GM12878 (cell line): ENCODE measurements at regions of chr14 and their contacts with region 1.

Region 1: GRCh38 chr14:81220830-81221578 is at the start of gene GTF2A1:
- DNase-seq: peak; percentile 82
- ATAC-seq: peak; percentile 84
- H3K4me3 ChIP-seq: peak within 1 kb of the TSS; percentile 85
- H3K27ac ChIP-seq: peak within 1 kb of the TSS; percentile 98
- H3K4me1 ChIP-seq: 0 out of 2 replicates have a peak, but pooled peaks cover 3% of the 10 kb centered on the region
- H3K27me3 ChIP-seq: no peaks in the 10 kb centered on the region
- CTCF ChIP-seq: no peak
- EP300 ChIP-seq: peak; percentile 2 to 49; a peak in 1 of 4 replicates
- POLR2A ChIP-seq: peak; percentile 95
- RAD21 ChIP-seq: no peak
- polyA plus RNA-seq, gene GTF2A1: 3.5 to 5.1 TPM

Region 2: GRCh38 chr14:80941241-80942182 is 279.5 kb before region 1 on chr14 and contains the start of gene CEP128:
- CTCF ChIA-PET with region 1: no interaction called
- POLR2A ChIA-PET with region 1: interaction called, 5 read pairs
- RAD21 ChIA-PET with region 1: no interaction called
- SMC1A ChIA-PET with region 1: no interaction called
- in situ Hi-C with region 1: no loop called
- intact Hi-C with region 1: loop called (anchors 5 kb)
- DNase-seq: peak; percentile 92
- ATAC-seq: peak; percentile 98
- H3K4me3 ChIP-seq: peak within 1 kb of the TSS; percentile 60
- H3K27ac ChIP-seq: peak within 1 kb of the TSS; percentile 78
- H3K4me1 ChIP-seq: no peaks in the 10 kb centered on the region
- H3K27me3 ChIP-seq: no peaks in the 10 kb centered on the region
- CTCF ChIP-seq: no peak
- EP300 ChIP-seq: no peak
- POLR2A ChIP-seq: peak; percentile 55
- RAD21 ChIP-seq: no peak
- polyA plus RNA-seq, gene CEP128: 1.1 to 2.4 TPM

Region 3: GRCh38 chr14:80954687-80955299 is 266.2 kb before region 1 on chr14:
- CTCF ChIA-PET with region 1: no interaction called
- POLR2A ChIA-PET with region 1: no interaction called
- RAD21 ChIA-PET with region 1: no interaction called
- SMC1A ChIA-PET with region 1: no interaction called
- in situ Hi-C with region 1: no loop called
- intact Hi-C with region 1: loop called (anchors 2 kb)
- DNase-seq: no peak
- ATAC-seq: peak; percentile 46
- H3K4me3 ChIP-seq: no peak overlapping the region; the same call in 1 of the 2 replicates
- H3K27ac ChIP-seq: no peak overlapping the region
- H3K4me1 ChIP-seq: peaks cover 12% of the 10 kb centered on the region
- H3K27me3 ChIP-seq: peaks cover 0 to 5% of the 10 kb centered on the region in 2 experiments; a peak in 3 of 4 replicates
- CTCF ChIP-seq: peak; percentile 70 to 83 (median 71)
- EP300 ChIP-seq: no peak
- POLR2A ChIP-seq: no peak
- RAD21 ChIP-seq: peak; percentile 84

Region 4: DNA sequence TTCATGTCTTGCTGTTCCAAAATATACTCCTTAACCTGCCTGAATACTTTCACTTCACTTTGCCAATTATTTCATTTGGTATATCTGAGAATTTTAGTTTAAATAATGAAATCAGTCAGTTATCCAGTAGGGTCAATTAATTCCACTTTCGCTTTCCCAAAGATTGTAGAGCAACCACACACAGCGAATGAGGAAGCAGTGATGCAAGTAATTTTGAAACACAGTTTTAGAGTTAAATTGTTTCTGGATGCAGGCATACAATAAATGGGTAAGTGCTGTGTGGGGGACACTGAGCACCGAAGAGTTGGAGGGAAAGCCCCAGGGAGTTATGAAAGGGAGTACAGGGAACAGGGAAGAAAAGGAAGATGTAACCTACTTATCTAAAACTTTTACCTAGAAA is 202.8 kb before region 1 on chr14:
- CTCF ChIA-PET with region 1: no interaction called
- POLR2A ChIA-PET with region 1: no interaction called
- RAD21 ChIA-PET with region 1: no interaction called
- SMC1A ChIA-PET with region 1: no interaction called
- in situ Hi-C with region 1: no loop called
- intact Hi-C with region 1: no loop called
- DNase-seq: no peak
- ATAC-seq: no peak
- H3K4me3 ChIP-seq: no peak overlapping the region
- H3K27ac ChIP-seq: no peak overlapping the region
- H3K4me1 ChIP-seq: no peaks in the 10 kb centered on the region
- H3K27me3 ChIP-seq: no peaks in the 10 kb centered on the region
- CTCF ChIP-seq: no peak
- EP300 ChIP-seq: no peak
- POLR2A ChIP-seq: no peak
- RAD21 ChIP-seq: no peak

Region 5: DNA sequence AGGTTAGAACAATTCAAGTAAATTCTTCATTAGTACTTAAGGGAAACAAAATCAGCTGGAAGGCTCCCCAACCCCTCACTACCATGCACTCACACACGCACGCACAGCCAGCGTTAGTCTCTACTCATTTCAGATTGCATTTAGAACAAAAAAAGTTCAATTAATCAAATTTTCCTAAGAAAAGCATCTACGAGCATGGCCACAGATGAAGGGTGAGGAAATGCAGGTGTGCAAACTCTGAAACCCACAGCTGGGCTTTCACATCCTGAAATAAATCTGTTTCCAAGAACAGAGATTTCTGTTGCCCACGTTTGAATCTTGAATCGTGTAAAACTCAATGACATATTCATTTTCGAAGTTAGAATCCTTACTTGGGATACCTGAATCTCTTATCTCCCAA is 250.1 kb after region 1 on chr14:
- CTCF ChIA-PET with region 1: interaction called, 4 read pairs
- POLR2A ChIA-PET with region 1: interaction called, 5 read pairs
- RAD21 ChIA-PET with region 1: interaction called, 3 read pairs
- SMC1A ChIA-PET with region 1: interaction called, 4 read pairs
- in situ Hi-C with region 1: no loop called
- intact Hi-C with region 1: loop called (anchors 2 kb)
- DNase-seq: no peak
- ATAC-seq: peak; percentile 31
- H3K4me3 ChIP-seq: peak overlapping the region; percentile 36; the same call in 1 of the 2 replicates
- H3K27ac ChIP-seq: peak overlapping the region; percentile 97
- H3K4me1 ChIP-seq: peaks cover 54% of the 10 kb centered on the region
- H3K27me3 ChIP-seq: no peaks in the 10 kb centered on the region
- CTCF ChIP-seq: no peak
- EP300 ChIP-seq: peak; percentile 44 to 76; a peak in 2 of 4 replicates
- POLR2A ChIP-seq: no peak
- RAD21 ChIP-seq: no peak

Region 6: GRCh38 chr14:81533536-81534343 is 312.7 kb after region 1 on chr14 and contains the start of gene SEL1L:
- CTCF ChIA-PET with region 1: no interaction called
- POLR2A ChIA-PET with region 1: interaction called, 4 read pairs
- RAD21 ChIA-PET with region 1: no interaction called
- SMC1A ChIA-PET with region 1: no interaction called
- in situ Hi-C with region 1: no loop called
- intact Hi-C with region 1: loop called (anchors 1 kb)
- DNase-seq: peak; percentile 99
- ATAC-seq: peak; percentile 95
- H3K4me3 ChIP-seq: peak within 1 kb of the TSS; percentile 92
- H3K27ac ChIP-seq: peak within 1 kb of the TSS; percentile 80
- H3K4me1 ChIP-seq: peaks cover 20% of the 10 kb centered on the region
- H3K27me3 ChIP-seq: no peaks in the 10 kb centered on the region
- CTCF ChIP-seq: no peak
- EP300 ChIP-seq: no peak
- POLR2A ChIP-seq: peak; percentile 99
- RAD21 ChIP-seq: no peak
- polyA plus RNA-seq, gene SEL1L: 13.4 to 20.1 TPM